HCT116 (cell line): ENCODE measurements at regions of chr10 and their contacts with region 1.

Region 1: GRCh38 chr10:61140765-61141392 is 196.9 kb upstream of the RHOBTB1 start:
- DNase-seq: peak; percentile 57
- ATAC-seq: peak; percentile 89
- H3K4me3 ChIP-seq: no peak overlapping the region
- H3K27ac ChIP-seq: no peak overlapping the region
- H3K4me1 ChIP-seq: no peaks in the 10 kb centered on the region
- H3K27me3 ChIP-seq: no peaks in the 10 kb centered on the region
- CTCF ChIP-seq: peak; percentile 45 to 78 (median 48); a peak in 5 of 6 replicates
- POLR2A ChIP-seq: no peak
- RAD21 ChIP-seq: peak; percentile 71

Region 2: DNA sequence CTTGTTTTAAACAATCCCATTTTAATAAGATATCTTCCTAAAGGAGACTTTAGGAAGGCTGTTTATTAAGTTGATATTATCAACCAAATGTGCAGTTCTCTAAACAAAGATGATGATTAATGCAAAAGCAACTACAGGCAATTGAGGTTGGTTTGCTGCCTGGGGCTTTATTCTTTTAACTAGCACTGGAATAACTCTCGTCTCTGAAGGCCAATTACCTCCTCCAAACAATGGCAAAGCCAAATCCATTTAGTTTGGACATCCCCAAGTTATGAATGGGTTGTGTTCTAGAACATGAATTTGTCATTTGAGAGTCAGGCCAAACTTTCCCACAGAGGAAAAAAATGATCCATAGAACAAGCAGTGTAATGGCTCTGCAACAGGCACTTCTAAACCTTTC is 1545.3 kb before region 1 on chr10:
- CTCF ChIA-PET with region 1: no interaction called
- POLR2A ChIA-PET with region 1: no interaction called
- RAD21 ChIA-PET with region 1: no interaction called
- intact Hi-C with region 1: no loop called
- DNase-seq: no peak
- ATAC-seq: no peak
- H3K4me3 ChIP-seq: no peak overlapping the region
- H3K27ac ChIP-seq: no peak overlapping the region
- H3K4me1 ChIP-seq: no peaks in the 10 kb centered on the region
- H3K27me3 ChIP-seq: no peaks in the 10 kb centered on the region
- CTCF ChIP-seq: no peak
- POLR2A ChIP-seq: no peak
- RAD21 ChIP-seq: no peak

Region 3: DNA sequence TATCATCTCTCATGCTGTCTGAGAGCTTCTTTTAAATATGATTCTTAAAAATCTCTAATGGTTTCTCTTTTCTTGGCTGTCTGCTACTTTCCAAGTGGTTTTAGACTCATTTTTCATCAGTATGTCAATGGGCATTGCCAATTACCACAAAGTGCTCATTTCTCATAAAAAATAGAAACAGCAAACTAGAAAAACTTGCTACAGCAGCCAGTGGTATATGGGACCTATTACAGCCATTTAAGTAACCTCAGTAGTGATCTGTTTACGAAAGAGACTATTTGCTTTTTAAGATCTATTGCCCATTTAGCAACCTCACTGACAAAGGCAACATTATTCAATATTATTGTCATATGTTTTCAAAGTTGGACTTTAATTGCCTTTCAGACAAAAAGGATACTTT is 10.2 kb after region 1 on chr10:
- CTCF ChIA-PET with region 1: interaction called, 15 read pairs
- POLR2A ChIA-PET with region 1: no interaction called
- RAD21 ChIA-PET with region 1: no interaction called
- intact Hi-C with region 1: no loop called
- DNase-seq: no peak
- ATAC-seq: no peak
- H3K4me3 ChIP-seq: no peak overlapping the region
- H3K27ac ChIP-seq: no peak overlapping the region
- H3K4me1 ChIP-seq: no peaks in the 10 kb centered on the region
- H3K27me3 ChIP-seq: no peaks in the 10 kb centered on the region
- CTCF ChIP-seq: no peak
- POLR2A ChIP-seq: no peak
- RAD21 ChIP-seq: no peak

Region 4: DNA sequence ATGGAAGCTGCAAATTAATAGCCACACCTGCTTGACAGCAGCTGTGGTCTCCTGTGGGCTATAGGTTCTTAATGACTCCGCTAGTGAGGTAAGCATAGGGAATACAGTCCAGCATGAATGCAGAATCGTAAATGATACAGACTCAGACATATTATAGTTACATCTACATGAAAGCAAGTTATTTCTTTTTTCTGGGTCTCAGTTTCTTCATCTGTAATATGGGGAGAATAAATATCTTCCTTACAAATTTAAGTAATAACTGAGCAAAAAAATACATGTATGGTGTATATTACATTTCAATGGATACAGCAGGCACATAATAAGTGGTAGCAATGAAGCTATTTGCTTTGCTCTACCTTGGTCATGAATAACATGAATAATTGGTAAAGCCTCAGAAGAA is 49.0 kb after region 1 on chr10:
- CTCF ChIA-PET with region 1: interaction called, 7 read pairs
- POLR2A ChIA-PET with region 1: no interaction called
- RAD21 ChIA-PET with region 1: no interaction called
- intact Hi-C with region 1: loop called (anchors 2 kb)
- DNase-seq: no peak
- ATAC-seq: no peak
- H3K4me3 ChIP-seq: no peak overlapping the region
- H3K27ac ChIP-seq: no peak overlapping the region
- H3K4me1 ChIP-seq: no peaks in the 10 kb centered on the region
- H3K27me3 ChIP-seq: no peaks in the 10 kb centered on the region
- CTCF ChIP-seq: no peak
- POLR2A ChIP-seq: no peak
- RAD21 ChIP-seq: no peak

Region 5: DNA sequence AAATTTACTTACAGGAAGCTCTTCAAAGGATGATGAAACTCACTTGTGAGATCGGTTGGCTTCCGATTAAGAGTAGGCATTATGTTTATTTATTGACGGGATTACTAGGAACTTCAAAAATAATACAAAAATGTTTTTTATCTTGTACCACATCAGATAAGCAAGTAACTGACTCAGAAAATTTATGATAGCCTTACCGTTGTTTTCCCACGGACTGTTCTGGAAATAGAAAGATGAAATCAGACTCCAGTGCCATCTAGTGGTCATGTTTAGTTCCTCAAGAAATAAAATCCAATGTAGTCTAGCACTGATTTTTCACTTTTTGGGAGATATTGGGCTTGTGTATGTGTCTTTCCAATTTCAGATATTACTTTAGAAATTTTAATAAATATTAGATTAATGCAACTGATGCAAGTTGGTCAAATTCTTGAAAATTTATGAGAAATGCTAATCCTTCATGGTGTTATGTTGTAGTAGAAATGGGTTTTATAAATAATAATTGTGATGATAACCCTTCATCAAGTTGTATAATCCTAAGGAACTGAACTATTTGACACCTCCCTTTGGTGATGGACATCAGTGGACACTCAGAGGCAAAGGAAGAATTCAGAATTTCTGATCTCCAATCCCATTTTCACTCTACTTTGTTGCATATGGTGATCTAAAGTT is 143.5 kb after region 1 on chr10:
- CTCF ChIA-PET with region 1: interaction called, 3 read pairs
- POLR2A ChIA-PET with region 1: no interaction called
- RAD21 ChIA-PET with region 1: no interaction called
- intact Hi-C with region 1: loop called (anchors 5 kb)
- DNase-seq: peak; percentile 34
- ATAC-seq: peak; percentile 60
- H3K4me3 ChIP-seq: no peak overlapping the region
- H3K27ac ChIP-seq: no peak overlapping the region
- H3K4me1 ChIP-seq: peaks cover 0 to 7% of the 10 kb centered on the region in 2 experiments; a peak in 2 of 4 replicates
- H3K27me3 ChIP-seq: no peaks in the 10 kb centered on the region
- CTCF ChIP-seq: peak; percentile 57 to 66 (median 65); a peak in 5 of 6 replicates
- POLR2A ChIP-seq: no peak
- RAD21 ChIP-seq: peak; percentile 70

Region 6: DNA sequence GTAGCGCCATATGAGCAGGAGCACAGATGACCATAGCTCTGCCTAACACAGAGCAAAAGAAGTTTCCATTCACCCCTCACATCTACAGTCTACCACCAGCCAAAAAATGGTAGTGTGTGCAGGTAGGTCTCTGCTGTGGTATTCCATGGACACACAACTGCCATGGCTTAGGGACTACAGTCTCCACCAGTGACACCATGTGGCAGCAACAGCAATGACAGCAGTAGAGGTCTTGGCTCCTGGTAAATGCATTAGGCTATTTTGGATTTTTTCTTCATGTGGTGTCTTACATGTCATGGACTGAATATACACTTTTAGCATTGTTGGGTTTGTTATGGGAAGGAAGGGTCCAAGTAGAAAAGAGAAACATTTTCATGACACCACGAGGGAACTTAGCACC is 451.7 kb after region 1 on chr10:
- CTCF ChIA-PET with region 1: no interaction called
- POLR2A ChIA-PET with region 1: no interaction called
- RAD21 ChIA-PET with region 1: no interaction called
- intact Hi-C with region 1: loop called (anchors 5 kb)
- DNase-seq: peak; percentile 33
- ATAC-seq: peak; percentile 95
- H3K4me3 ChIP-seq: no peak overlapping the region
- H3K27ac ChIP-seq: no peak overlapping the region
- H3K4me1 ChIP-seq: peaks cover 0 to 3% of the 10 kb centered on the region in 2 experiments; a peak in 1 of 4 replicates
- H3K27me3 ChIP-seq: no peaks in the 10 kb centered on the region
- CTCF ChIP-seq: peak; percentile 25 to 76 (median 74); a peak in 5 of 6 replicates
- POLR2A ChIP-seq: no peak
- RAD21 ChIP-seq: peak; percentile 44

Region 7: GRCh38 chr10:61733358-61733940 is 592.6 kb after region 1 on chr10:
- CTCF ChIA-PET with region 1: interaction called, 3 read pairs
- POLR2A ChIA-PET with region 1: no interaction called
- RAD21 ChIA-PET with region 1: no interaction called
- intact Hi-C with region 1: loop called (anchors 5 kb)
- DNase-seq: peak; percentile 47
- ATAC-seq: peak; percentile 60; the same call in 1 of the 2 replicates
- H3K4me3 ChIP-seq: no peak overlapping the region
- H3K27ac ChIP-seq: no peak overlapping the region
- H3K4me1 ChIP-seq: no peaks in the 10 kb centered on the region
- H3K27me3 ChIP-seq: no peaks in the 10 kb centered on the region
- CTCF ChIP-seq: peak; percentile 52 to 71 (median 53); a peak in 5 of 6 replicates
- POLR2A ChIP-seq: no peak
- RAD21 ChIP-seq: peak; percentile 74

Region 8: GRCh38 chr10:61835069-61835945 is 694.4 kb after region 1 on chr10:
- CTCF ChIA-PET with region 1: interaction called, 6 read pairs
- POLR2A ChIA-PET with region 1: no interaction called
- RAD21 ChIA-PET with region 1: no interaction called
- intact Hi-C with region 1: loop called (anchors 10 kb)
- DNase-seq: peak; percentile 71
- ATAC-seq: peak; percentile 62
- H3K4me3 ChIP-seq: peak overlapping the region in 1 of 2 experiments; percentile 41; a peak in 1 of 4 replicates
- H3K27ac ChIP-seq: peak overlapping the region; percentile 85; the same call in 1 of the 2 replicates
- H3K4me1 ChIP-seq: peaks cover 32 to 50% of the 10 kb centered on the region in 2 experiments
- H3K27me3 ChIP-seq: no peaks in the 10 kb centered on the region
- CTCF ChIP-seq: peak; percentile 62 to 63 (median 62); a peak in 5 of 6 replicates
- POLR2A ChIP-seq: no peak
- RAD21 ChIP-seq: peak; percentile 80